ENCODE measurements at regions of chr11 and their contacts with region 1.

Region 1: GRCh38 chr11:77187776-77188632 is 60.0 kb downstream of the MYO7A start:
- DNase-seq: peak; percentile 21
- H3K4me3 ChIP-seq: no peak overlapping the region
- CTCF ChIP-seq: peak; percentile 86

Region 2: GRCh38 chr11:77107950-77108349 is 80.1 kb before region 1 on chr11:
- CTCF ChIA-PET with region 1: interaction called, 10 read pairs
- POLR2A ChIA-PET with region 1: no interaction called
- DNase-seq: peak; percentile 65
- H3K4me3 ChIP-seq: no peak overlapping the region; the same call in 1 of the 2 replicates
- CTCF ChIP-seq: no peak

Region 3: DNA sequence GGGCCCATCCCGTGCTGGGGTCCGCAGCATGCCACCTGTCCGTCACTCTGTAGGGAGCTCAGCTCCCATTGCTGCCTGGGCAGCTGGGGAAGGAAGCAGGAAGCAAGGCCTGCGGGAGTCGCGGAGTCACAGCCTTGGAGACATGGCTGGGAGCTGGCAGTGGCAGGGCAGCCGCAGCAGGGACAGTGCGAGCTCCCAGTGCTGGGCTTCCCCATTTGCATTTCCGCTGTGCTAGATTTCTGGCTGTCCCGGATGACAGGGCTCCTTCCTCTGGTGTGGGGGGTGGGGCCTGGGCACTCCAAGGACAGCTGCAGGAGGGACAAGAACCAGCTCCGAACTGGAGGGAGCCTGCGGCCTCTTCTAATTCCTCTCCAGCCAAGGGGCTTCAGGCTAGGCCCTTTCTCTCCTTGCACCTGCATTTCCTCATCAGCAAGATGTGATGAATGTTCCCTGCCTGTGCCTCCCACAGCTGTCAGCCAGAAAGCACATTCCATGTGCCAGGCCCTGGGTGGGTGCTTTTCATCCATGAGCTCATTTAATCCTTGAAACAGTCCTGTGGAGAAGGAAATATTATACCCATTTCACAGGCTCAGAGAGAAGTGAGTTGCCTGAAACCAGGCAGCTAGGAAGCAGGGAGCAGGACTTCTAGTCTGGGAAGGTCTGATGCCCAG is 12.0 kb before region 1 on chr11:
- CTCF ChIA-PET with region 1: interaction called, 22 read pairs
- POLR2A ChIA-PET with region 1: no interaction called
- DNase-seq: no peak
- H3K4me3 ChIP-seq: no peak overlapping the region
- CTCF ChIP-seq: no peak

Measured in AG04449 (cell line).